ENCODE measurements at regions of chr1 and their contacts with region 1.

Region 1: DNA sequence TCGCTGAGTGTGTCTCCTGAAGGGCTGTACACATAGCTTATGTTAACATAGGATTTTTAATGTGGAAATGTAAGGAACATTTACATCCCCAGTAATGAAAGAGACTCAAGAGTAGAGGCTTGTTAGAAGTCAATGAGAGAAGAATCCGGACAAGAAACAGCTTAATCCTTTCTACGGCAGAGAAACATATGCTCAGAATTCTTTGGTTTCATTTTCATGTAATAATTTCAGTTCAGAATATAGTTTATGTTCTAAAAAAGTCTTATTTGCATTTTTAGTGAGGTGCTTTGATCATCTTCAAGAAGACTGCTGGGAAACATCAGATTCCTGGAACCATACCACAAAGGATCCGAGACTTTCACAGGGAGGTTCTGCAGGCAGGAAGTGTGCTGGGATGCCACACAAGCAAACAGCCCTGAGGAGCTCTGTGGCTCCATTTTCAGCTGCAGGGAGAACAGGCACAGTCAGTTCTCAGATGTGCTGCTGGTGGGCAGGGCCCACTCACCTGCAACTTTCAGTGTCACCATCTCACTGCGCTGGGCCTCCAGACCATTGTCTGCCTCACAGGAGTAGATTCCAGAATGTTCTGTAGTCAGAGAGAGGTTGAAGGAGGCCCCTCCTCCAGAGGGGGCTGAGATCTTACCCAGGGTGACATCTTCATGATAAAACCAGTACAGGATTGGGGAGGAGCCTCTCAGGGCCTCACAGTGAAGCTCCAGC is 28.4 kb downstream of the FCRL5 start:
- DNase-seq: peak; percentile 40
- ATAC-seq: peak; percentile 83
- H3K4me3 ChIP-seq: no peak overlapping the region; the same call in 1 of the 2 replicates
- H3K27ac ChIP-seq: peak overlapping the region; percentile 63
- H3K4me1 ChIP-seq: peaks cover 17% of the 10 kb centered on the region
- H3K27me3 ChIP-seq: no peaks in the 10 kb centered on the region
- CTCF ChIP-seq: no peak
- EP300 ChIP-seq: no peak
- POLR2A ChIP-seq: 0 out of 2 replicates have a peak, but pooled peaks have one; percentile 39
- RAD21 ChIP-seq: no peak

Region 2: DNA sequence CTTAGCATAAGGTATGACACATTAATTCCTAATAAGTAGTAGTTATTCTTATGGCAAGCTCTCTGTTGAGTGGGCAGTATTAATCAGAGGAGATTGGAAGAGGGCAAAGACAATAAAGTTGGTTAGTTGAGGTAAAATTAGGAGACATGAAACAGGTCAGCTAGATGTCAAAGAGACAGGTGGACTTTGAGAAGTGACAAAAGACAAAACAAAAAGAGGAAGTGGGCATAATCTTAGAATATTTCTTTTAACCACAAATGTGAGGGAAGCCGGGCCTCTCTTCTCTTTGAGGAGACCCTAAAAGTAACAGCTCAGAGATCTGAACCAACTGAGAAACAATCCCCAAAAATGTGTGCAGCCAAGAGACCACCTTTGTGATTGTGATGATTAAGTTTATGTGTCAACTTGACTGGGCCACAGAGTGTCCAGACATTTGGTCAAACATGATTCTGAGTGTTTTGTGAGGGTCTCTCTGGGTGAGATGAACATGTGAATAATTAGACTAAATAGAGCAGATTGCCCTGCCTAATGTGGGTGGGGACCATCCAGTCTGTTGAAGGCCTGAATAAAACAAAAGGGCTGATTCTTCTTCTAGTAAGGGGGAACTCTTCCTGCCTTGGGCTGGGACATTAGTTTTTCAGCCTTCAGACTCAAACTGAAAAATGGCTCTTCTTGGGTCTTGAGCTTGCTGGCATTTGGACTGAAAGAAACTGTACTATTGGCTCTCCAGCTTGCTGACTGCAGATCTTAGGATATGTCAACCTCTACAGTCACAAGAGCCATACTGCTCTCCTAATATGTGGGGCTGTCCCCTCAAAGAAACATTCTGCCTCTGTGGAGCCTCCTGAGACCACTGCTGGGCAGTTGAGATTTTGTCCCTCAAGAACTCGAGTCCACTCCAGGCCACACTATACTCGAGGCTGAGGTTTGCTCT is 11.6 kb before region 1 on chr1:
- CTCF ChIA-PET with region 1: interaction called, 3 read pairs
- POLR2A ChIA-PET with region 1: interaction called, 11 read pairs
- RAD21 ChIA-PET with region 1: interaction called, 10 read pairs
- SMC1A ChIA-PET with region 1: interaction called, 9 read pairs
- in situ Hi-C with region 1: no loop called
- intact Hi-C with region 1: no loop called
- DNase-seq: peak; percentile 68
- ATAC-seq: peak; percentile 74
- H3K4me3 ChIP-seq: no peak overlapping the region
- H3K27ac ChIP-seq: peak overlapping the region; percentile 88
- H3K4me1 ChIP-seq: peaks cover 50% of the 10 kb centered on the region
- H3K27me3 ChIP-seq: no peaks in the 10 kb centered on the region
- CTCF ChIP-seq: no peak
- EP300 ChIP-seq: peak; percentile 89 to 95
- POLR2A ChIP-seq: no peak
- RAD21 ChIP-seq: no peak

Region 3: DNA sequence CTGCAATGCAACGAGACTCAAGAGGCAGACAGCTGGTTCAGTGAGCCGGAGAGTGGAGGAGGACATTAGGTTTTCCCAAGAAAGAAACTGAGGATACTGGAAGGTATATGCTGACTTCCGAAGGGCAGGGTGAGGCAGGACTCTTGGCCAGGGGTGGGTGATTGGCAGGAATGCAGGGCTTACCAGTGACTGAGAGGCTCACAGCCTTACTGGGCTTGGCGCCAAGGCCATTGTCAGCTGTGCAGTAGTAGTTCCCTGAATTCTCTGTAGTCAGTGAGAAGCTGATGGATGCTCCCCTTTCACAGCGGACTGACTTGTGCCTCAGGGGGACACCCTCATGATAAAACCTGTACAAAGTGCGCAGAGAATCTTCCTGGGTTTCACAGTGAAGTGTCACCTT is 18.7 kb after region 1 on chr1:
- CTCF ChIA-PET with region 1: interaction called, 4 read pairs
- POLR2A ChIA-PET with region 1: interaction called, 11 read pairs
- RAD21 ChIA-PET with region 1: interaction called, 3 read pairs
- SMC1A ChIA-PET with region 1: interaction called, 4 read pairs
- in situ Hi-C with region 1: no loop called
- intact Hi-C with region 1: no loop called
- DNase-seq: no peak
- ATAC-seq: no peak
- H3K4me3 ChIP-seq: no peak overlapping the region
- H3K27ac ChIP-seq: no peak overlapping the region
- H3K4me1 ChIP-seq: peaks cover 6% of the 10 kb centered on the region; the same call in 1 of the 2 replicates
- H3K27me3 ChIP-seq: 0 out of 4 replicates have a peak, but pooled peaks cover 0 to 3% of the 10 kb centered on the region in 2 experiments
- CTCF ChIP-seq: no peak
- EP300 ChIP-seq: no peak
- POLR2A ChIP-seq: no peak
- RAD21 ChIP-seq: no peak

Region 4: GRCh38 chr1:157671895-157672294 is 148.0 kb after region 1 on chr1:
- CTCF ChIA-PET with region 1: no interaction called
- POLR2A ChIA-PET with region 1: no interaction called
- RAD21 ChIA-PET with region 1: no interaction called
- SMC1A ChIA-PET with region 1: no interaction called
- in situ Hi-C with region 1: no loop called
- intact Hi-C with region 1: no loop called
- DNase-seq: no peak
- ATAC-seq: no peak
- H3K4me3 ChIP-seq: no peak overlapping the region
- H3K27ac ChIP-seq: no peak overlapping the region
- H3K4me1 ChIP-seq: no peaks in the 10 kb centered on the region
- H3K27me3 ChIP-seq: 0 out of 4 replicates have a peak, but pooled peaks cover 0 to under 1% of the 10 kb centered on the region in 2 experiments
- CTCF ChIP-seq: no peak
- EP300 ChIP-seq: no peak
- POLR2A ChIP-seq: no peak
- RAD21 ChIP-seq: no peak